Left lung (tissue), 14 donors: ENCODE measurements at regions of chr7 and their contacts with region 1.

Region 1: GRCh38 chr7:129644634-129645230 is 33.2 kb downstream of the NRF1 start:
- DNase-seq: peak in 2 of 4 donors; percentile 28 to 51
- ATAC-seq: peak; percentile 71
- H3K4me3 ChIP-seq: no peak overlapping the region
- H3K27ac ChIP-seq: no peak overlapping the region
- H3K4me1 ChIP-seq: peaks cover 0 to 6% of the 10 kb centered on the region in 2 donors
- H3K27me3 ChIP-seq: no peaks in the 10 kb centered on the region
- CTCF ChIP-seq: peak in 1 of 2 donors; percentile 36

Region 2: DNA sequence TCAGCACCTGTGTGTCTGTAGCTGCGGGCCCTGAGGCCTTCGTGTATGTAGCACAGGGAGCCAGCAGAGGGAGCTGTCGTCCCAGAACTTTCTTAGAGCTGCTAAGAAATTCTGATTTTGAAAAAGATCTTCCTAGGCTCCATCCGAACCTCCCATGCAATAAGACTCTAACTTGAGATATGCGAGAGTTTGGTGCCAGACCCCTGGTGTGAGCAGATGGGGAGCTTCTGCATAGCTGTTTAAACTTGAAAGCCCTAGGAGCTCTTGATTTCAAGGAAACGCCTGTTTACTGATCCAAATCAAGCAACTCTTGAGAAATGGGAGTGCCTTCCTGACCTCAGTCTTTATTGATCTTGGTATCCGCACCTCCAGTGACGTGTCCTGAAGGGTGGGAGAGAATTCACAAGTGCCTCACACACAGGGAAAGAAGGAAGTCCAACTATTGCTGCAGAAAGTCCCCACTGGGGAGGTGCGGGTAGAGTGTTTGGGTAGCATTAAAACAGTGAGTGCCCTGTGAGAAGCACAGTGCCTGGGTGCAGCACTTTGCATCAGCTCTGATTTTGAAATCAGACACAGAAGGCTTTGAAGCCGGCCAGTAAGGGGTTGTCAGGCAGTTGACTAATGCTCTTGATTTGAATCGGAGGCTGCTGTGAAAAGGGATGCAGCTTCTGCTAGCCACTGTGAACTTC is 276.9 kb before region 1 on chr7:
- intact Hi-C with region 1: loop called in 1 of 2 experiments (anchors 10 kb)
- DNase-seq: peak; percentile 70 to 89 (median 82)
- ATAC-seq: peak; percentile 87
- H3K4me3 ChIP-seq: peak overlapping the region; percentile 19 to 33
- H3K27ac ChIP-seq: peak overlapping the region; percentile 71 to 75
- H3K4me1 ChIP-seq: peaks cover 0 to 21% of the 10 kb centered on the region in 2 donors
- H3K27me3 ChIP-seq: no peaks in the 10 kb centered on the region
- CTCF ChIP-seq: peak; percentile 78 to 89

Region 3: GRCh38 chr7:129405527-129405926 is 239.2 kb before region 1 on chr7:
- intact Hi-C with region 1: no loop called
- DNase-seq: no peak
- ATAC-seq: no peak
- H3K4me3 ChIP-seq: no peak overlapping the region
- H3K27ac ChIP-seq: no peak overlapping the region
- H3K4me1 ChIP-seq: no peaks in the 10 kb centered on the region
- H3K27me3 ChIP-seq: no peaks in the 10 kb centered on the region
- CTCF ChIP-seq: no peak

Region 4: DNA sequence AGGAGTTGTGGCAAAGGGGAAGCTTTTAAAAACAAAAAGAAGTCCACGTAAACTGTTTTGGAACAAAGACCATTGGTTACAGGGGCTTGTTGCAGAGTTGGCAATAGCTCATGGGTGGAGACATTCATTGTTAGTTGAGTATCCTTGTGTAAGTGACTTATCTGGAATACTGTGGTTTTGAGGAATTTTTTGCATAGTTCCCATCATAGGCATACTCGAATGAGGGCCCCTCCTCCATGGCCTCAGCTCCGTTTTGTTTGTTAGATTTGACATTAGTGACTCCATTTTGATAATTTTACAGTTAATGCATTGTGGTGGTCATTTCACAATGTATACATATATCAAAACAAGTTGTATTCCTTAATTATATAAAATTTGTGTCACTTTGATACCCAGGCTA is 155.2 kb before region 1 on chr7:
- intact Hi-C with region 1: loop called in 1 of 2 experiments (anchors 10 kb)
- DNase-seq: no peak
- ATAC-seq: no peak
- H3K4me3 ChIP-seq: no peak overlapping the region
- H3K27ac ChIP-seq: no peak overlapping the region
- H3K4me1 ChIP-seq: no peaks in the 10 kb centered on the region
- H3K27me3 ChIP-seq: no peaks in the 10 kb centered on the region
- CTCF ChIP-seq: no peak